ENCODE measurements at regions of chr15 and their contacts with region 1.

Region 1: GRCh38 chr15:28935326-28935725 is 49.6 kb downstream of the APBA2 start:
- DNase-seq: peak; percentile 75
- ATAC-seq: peak; percentile 53
- H3K4me3 Mint-ChIP-seq: no peak overlapping the region
- H3K27ac Mint-ChIP-seq: no peak overlapping the region
- H3K4me1 Mint-ChIP-seq: peaks cover 69% of the 10 kb centered on the region
- H3K27me3 Mint-ChIP-seq: no peaks in the 10 kb centered on the region

Region 2: GRCh38 chr15:27906802-27907201 is 1028.5 kb before region 1 on chr15:
- CTCF ChIA-PET with region 1: no interaction called
- POLR2A ChIA-PET with region 1: no interaction called
- intact Hi-C with region 1: no loop called
- DNase-seq: no peak
- ATAC-seq: no peak
- H3K4me3 Mint-ChIP-seq: no peak overlapping the region
- H3K27ac Mint-ChIP-seq: no peak overlapping the region
- H3K4me1 Mint-ChIP-seq: no peaks in the 10 kb centered on the region
- H3K27me3 Mint-ChIP-seq: no peaks in the 10 kb centered on the region

Region 3: GRCh38 chr15:28726102-28726501 is 209.2 kb before region 1 on chr15:
- CTCF ChIA-PET with region 1: no interaction called
- POLR2A ChIA-PET with region 1: no interaction called
- intact Hi-C with region 1: no loop called
- DNase-seq: no peak
- ATAC-seq: no peak
- H3K4me3 Mint-ChIP-seq: no peak overlapping the region
- H3K27ac Mint-ChIP-seq: no peak overlapping the region
- H3K4me1 Mint-ChIP-seq: peaks cover 7% of the 10 kb centered on the region
- H3K27me3 Mint-ChIP-seq: peaks cover 5% of the 10 kb centered on the region

Region 4: GRCh38 chr15:28885630-28886430 is 49.5 kb before region 1 on chr15 and contains the start of gene APBA2:
- CTCF ChIA-PET with region 1: interaction called, 3 read pairs
- POLR2A ChIA-PET with region 1: no interaction called
- intact Hi-C with region 1: loop called in 1 of 2 experiments (anchors 5 kb)
- DNase-seq: peak; percentile 72
- ATAC-seq: peak; percentile 56
- H3K4me3 Mint-ChIP-seq: peak within 1 kb of the TSS; percentile 71
- H3K27ac Mint-ChIP-seq: no peak within 1 kb of the TSS
- H3K4me1 Mint-ChIP-seq: peaks cover 43% of the 10 kb centered on the region
- H3K27me3 Mint-ChIP-seq: no peaks in the 10 kb centered on the region
- total RNA-seq, gene APBA2: 12.8 to 17.5 TPM

Region 5: DNA sequence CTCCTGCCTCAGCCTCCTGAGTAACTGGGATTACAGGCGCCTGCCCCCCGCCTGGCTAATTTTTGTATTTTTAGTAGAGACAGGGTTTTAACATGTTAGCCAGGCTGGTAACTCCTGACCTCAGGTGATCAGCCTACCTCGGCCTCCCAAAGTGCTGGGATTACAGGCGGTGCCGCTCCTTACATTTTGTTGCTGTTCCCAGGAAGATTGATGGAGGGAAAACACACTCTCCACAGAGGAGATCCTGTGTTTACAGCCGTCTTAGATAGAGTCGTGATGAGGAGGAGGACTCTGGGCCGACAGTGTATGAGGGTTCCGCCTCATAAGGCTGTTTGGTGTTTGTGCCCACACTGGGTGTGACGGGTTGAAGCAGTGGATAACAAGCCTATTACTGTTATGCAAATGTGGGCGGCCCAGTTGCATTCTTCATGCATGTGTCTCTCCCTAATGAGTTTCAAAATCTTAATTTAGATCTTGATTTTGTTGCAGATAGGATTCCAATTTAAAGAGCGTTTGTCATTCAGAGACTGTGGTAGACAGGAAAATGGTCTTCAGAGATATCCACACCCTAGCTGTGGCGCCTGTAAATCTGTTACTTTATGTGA is 10.4 kb after region 1 on chr15:
- CTCF ChIA-PET with region 1: interaction called, 15 read pairs
- POLR2A ChIA-PET with region 1: no interaction called
- intact Hi-C with region 1: loop called in 1 of 2 experiments (anchors 1 kb)
- DNase-seq: no peak
- ATAC-seq: no peak
- H3K4me3 Mint-ChIP-seq: no peak overlapping the region
- H3K27ac Mint-ChIP-seq: no peak overlapping the region
- H3K4me1 Mint-ChIP-seq: peaks cover 74% of the 10 kb centered on the region
- H3K27me3 Mint-ChIP-seq: no peaks in the 10 kb centered on the region

Region 6: DNA sequence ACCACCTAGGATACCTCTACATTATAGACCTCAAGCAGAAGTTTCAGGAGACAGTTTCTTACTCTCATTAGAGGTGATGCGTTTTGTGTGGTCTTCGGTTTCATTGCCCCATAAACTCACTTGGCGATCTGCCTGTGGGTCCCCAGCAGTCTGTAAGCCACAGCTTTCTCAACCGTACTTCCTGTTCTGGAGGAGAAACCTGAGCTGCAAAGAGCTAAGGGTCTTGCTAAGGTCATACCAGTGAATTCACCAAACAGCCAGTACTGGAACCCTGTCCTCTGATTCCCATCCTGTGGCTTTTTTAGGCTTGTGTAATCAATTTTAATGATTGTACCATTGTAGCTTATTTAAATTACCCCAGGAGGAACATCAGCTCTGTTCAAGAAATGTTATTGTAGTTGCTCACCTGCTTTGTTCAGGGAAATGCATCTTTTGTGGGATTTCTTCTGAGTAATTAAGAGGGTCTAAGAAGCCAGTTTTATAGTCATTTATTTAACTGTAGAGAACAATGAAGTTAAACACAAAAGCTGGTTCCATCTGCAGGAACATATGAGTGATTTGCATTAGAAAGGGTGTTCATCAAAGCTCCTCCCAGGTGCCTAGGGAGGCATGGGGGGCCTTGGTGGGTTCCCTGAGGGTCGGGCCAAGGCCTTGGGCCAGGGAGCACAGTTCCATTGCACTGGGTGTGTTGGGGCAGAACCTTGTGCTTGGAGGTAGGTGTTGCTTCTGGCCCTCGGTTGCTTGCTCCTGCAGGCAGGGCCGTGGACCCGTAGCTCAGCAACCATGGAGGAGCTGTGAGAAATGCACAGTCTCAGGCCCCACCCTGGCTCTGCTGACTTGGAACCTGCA is 20.1 kb after region 1 on chr15:
- CTCF ChIA-PET with region 1: interaction called, 3 read pairs
- POLR2A ChIA-PET with region 1: no interaction called
- intact Hi-C with region 1: loop called in 1 of 2 experiments (anchors 2 kb)
- DNase-seq: no peak
- ATAC-seq: peak; percentile 60
- H3K4me3 Mint-ChIP-seq: no peak overlapping the region
- H3K27ac Mint-ChIP-seq: no peak overlapping the region
- H3K4me1 Mint-ChIP-seq: peaks cover 43% of the 10 kb centered on the region
- H3K27me3 Mint-ChIP-seq: no peaks in the 10 kb centered on the region

Region 7: DNA sequence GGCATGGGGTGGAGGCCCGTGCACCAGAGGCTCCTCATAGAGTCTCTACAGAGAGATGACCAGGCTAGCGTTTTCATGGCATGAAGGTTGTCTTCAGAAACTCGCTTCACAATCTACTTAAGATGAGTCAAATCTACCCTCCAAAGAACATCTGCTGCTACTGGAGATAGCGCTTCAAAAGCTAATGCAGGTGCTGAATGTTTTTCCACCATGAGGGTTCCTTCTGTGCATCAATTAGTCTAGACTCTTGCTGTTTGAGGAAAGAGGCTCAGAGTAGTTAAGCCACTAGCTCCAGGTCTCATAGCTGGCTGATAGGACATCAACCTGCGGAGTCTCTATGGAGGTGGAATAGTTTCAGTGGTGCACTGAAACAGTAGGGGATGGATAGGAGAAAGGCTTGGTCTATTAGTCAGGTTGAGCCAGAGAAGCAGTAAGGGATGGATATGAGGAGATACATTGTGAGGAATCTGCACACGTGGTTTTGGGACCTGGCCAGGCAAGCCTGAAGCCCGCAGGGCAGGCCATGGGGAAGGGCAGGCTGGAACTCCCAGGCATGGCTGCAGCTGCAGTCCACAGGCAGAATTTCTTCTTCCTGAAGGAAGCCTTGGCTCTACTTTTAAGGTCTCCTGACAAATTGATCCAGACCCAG is 68.0 kb after region 1 on chr15:
- CTCF ChIA-PET with region 1: no interaction called
- POLR2A ChIA-PET with region 1: no interaction called
- intact Hi-C with region 1: no loop called
- DNase-seq: no peak
- ATAC-seq: no peak
- H3K4me3 Mint-ChIP-seq: no peak overlapping the region
- H3K27ac Mint-ChIP-seq: no peak overlapping the region
- H3K4me1 Mint-ChIP-seq: peaks cover 22% of the 10 kb centered on the region
- H3K27me3 Mint-ChIP-seq: no peaks in the 10 kb centered on the region

Region 8: GRCh38 chr15:29045717-29046116 is 110.4 kb after region 1 on chr15:
- CTCF ChIA-PET with region 1: no interaction called
- POLR2A ChIA-PET with region 1: no interaction called
- intact Hi-C with region 1: no loop called
- DNase-seq: peak; percentile 54
- ATAC-seq: peak; percentile 100
- H3K4me3 Mint-ChIP-seq: no peak overlapping the region
- H3K27ac Mint-ChIP-seq: peak overlapping the region; percentile 25
- H3K4me1 Mint-ChIP-seq: peaks cover 58% of the 10 kb centered on the region
- H3K27me3 Mint-ChIP-seq: no peaks in the 10 kb centered on the region